Mucosa of descending colon (tissue), 3 donors: ENCODE measurements at regions of chr2 and their contacts with region 1.

Region 1: GRCh38 chr2:165401285-165401852 is 68.1 kb upstream of the CSRNP3 start:
- DNase-seq: peak in 1 of 3 donors; percentile 59
- ATAC-seq: peak; percentile 50
- H3K4me3 ChIP-seq: no peak overlapping the region
- H3K4me1 ChIP-seq: no peaks in the 10 kb centered on the region
- CTCF ChIP-seq: peak; percentile 47

Region 2: GRCh38 chr2:165268754-165269153 is 132.6 kb before region 1 on chr2:
- intact Hi-C with region 1: no loop called
- DNase-seq: no peak
- ATAC-seq: no peak
- H3K4me3 ChIP-seq: no peak overlapping the region
- H3K4me1 ChIP-seq: no peaks in the 10 kb centered on the region
- CTCF ChIP-seq: no peak

Region 3: DNA sequence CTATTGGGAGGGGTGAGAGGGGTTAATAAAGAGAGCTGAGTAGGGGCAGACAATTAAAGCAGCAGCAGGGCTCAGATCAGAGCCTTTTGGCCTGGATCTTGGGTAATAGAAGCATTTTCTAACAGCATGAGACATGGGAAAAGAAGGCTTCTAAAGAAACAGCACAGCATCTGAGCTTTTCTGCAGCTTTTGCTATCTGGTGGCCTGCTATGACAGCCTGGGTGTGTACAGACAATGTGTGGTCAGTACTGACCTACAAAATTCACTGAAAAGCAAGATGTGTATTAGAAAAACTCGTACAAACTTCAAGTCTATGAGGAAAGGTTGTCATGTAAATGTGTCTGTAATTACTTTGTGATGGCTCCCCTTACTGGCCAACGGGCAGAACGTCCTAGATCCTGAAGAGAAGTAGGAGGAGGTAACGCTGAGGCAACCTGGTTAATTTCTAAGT is 297.1 kb after region 1 on chr2:
- intact Hi-C with region 1: loop called (anchors 5 to 10 kb)
- DNase-seq: peak in 1 of 3 donors; percentile 55
- ATAC-seq: peak; percentile 71
- H3K4me3 ChIP-seq: no peak overlapping the region
- H3K4me1 ChIP-seq: no peaks in the 10 kb centered on the region
- CTCF ChIP-seq: no peak

Region 4: GRCh38 chr2:165889158-165889557 is 487.8 kb after region 1 on chr2:
- intact Hi-C with region 1: loop called in 1 of 2 experiments (anchors 10 kb)
- DNase-seq: no peak
- ATAC-seq: no peak
- H3K4me3 ChIP-seq: no peak overlapping the region
- H3K4me1 ChIP-seq: no peaks in the 10 kb centered on the region
- CTCF ChIP-seq: no peak